HEK293 (cell line): ENCODE measurements at regions of chr12 and their contacts with region 1.

Region 1: GRCh38 chr12:5083955-5084849 is 40.5 kb downstream of the KCNA5 start:
- H3K4me3 ChIP-seq: no peak overlapping the region
- H3K27ac ChIP-seq: no peak overlapping the region
- H3K4me1 ChIP-seq: no peaks in the 10 kb centered on the region
- CTCF ChIP-seq: peak; percentile 54; the same call in 1 of the 2 replicates

Region 2: DNA sequence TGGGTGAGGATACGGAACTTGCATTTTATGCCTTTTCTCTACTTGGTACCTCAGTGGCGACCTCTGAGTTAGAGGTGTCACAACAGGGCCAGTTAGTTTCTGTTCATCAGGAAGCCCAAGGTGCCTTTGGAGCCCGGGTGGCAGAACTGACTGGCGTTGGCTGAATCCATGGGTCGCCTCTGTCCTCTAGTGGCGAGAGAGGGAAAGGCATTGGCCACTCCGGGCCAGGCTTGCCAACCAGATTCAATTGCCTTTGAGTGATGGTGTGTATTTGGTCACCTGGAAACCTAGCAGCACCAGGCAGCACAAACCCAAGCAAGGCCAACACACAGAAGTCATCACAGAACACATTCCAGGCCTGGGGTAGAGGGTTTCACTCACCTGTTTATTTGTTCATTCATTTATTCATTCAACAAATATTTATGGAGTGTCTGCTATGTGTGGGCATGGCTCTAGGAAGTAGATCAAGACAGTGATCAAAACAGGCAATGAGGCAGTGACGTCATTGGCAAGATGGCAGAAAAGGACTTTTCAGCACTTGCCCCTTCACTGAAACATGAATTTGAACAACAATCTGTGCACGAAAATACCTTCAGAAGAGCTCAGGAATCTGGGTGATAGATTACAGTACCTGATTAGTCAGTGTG is 81.1 kb before region 1 on chr12:
- CTCF ChIA-PET with region 1: interaction called, 10 read pairs
- POLR2A ChIA-PET with region 1: no interaction called
- H3K4me3 ChIP-seq: no peak overlapping the region
- H3K27ac ChIP-seq: no peak overlapping the region
- H3K4me1 ChIP-seq: no peaks in the 10 kb centered on the region
- CTCF ChIP-seq: peak; percentile 85

Region 3: GRCh38 chr12:5022465-5023061 is 61.6 kb before region 1 on chr12:
- CTCF ChIA-PET with region 1: interaction called, 203 read pairs
- POLR2A ChIA-PET with region 1: no interaction called
- H3K4me3 ChIP-seq: no peak overlapping the region
- H3K27ac ChIP-seq: no peak overlapping the region
- H3K4me1 ChIP-seq: no peaks in the 10 kb centered on the region
- CTCF ChIP-seq: peak; percentile 82

Region 4: GRCh38 chr12:5073853-5074252 is 10.3 kb before region 1 on chr12:
- CTCF ChIA-PET with region 1: interaction called, 54 read pairs
- POLR2A ChIA-PET with region 1: no interaction called
- H3K4me3 ChIP-seq: no peak overlapping the region
- H3K27ac ChIP-seq: no peak overlapping the region
- H3K4me1 ChIP-seq: peaks cover 9% of the 10 kb centered on the region; the same call in 1 of the 2 replicates
- CTCF ChIP-seq: no peak

Region 5: DNA sequence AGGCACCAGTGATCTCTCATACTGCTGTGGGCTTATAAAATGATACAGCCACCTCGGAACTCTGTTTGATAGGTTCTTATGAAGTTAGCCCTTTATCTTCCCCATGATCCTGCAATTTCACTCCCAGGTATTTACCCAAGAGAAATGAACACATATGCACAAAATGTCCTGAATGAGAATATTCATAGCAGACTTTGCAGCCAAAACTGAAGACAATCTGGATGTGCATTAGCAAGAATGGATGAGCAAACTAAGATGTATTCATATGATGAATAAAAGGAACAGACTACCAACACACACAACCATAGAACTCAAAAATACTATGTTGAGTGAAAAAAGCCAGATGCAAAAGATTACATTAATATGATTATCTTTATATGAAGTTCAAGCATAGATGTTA is 26.1 kb after region 1 on chr12:
- CTCF ChIA-PET with region 1: no interaction called
- POLR2A ChIA-PET with region 1: no interaction called
- H3K4me3 ChIP-seq: no peak overlapping the region
- H3K27ac ChIP-seq: no peak overlapping the region
- H3K4me1 ChIP-seq: no peaks in the 10 kb centered on the region
- CTCF ChIP-seq: no peak